ENCODE measurements at regions of chr7 and their contacts with region 1.

Region 1: GRCh38 chr7:111855161-111855856 is 293.0 kb upstream of the IMMP2L start:
- DNase-seq: no peak
- ATAC-seq: peak; percentile 93

Region 2: GRCh38 chr7:111752022-111752582 is 103.2 kb before region 1 on chr7:
- intact Hi-C with region 1: loop called (anchors 10 kb)
- DNase-seq: peak; percentile 59
- ATAC-seq: peak; percentile 54